ENCODE measurements at regions of chr6 and their contacts with region 1.

Region 1: DNA sequence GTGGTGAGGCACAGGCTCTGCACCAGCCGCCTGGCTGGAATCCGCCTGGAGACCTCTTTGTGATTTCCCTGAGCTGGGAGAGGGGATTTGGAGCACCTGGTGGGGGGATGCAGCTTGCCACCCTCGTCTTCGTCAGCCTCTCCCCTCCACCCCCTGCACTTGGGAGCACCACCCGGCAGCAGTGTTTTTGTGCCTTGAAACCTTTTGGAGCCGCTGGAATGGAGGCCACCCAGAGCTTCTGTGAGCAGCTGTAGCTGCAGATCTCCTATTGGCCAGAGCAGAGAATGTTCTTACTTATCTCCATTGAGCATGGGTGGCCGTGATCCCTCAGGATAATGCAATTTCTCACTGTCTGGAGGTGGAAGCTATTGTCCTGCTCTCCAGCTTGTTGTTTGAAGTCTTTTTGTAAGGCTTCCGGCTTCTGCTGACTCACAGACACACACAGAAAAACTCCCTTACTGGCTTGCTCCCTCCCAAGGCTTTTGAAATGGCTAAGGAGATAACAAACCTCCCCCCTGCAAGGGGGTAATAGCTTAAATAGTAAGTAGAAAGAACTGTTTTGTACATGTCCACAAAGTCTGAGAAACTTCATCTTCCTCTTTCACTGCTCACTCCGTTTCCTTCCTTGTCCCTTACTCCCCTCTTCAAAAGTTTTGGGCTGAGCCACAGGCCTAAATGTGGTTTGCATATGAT is 271.2 kb downstream of the PRL start:
- DNase-seq: peak; percentile 13
- H3K4me3 Mint-ChIP-seq: peak overlapping the region; percentile 43
- H3K27ac Mint-ChIP-seq: peak overlapping the region; percentile 78
- H3K4me1 Mint-ChIP-seq: peaks cover 39% of the 10 kb centered on the region
- H3K27me3 Mint-ChIP-seq: no peaks in the 10 kb centered on the region

Region 2: DNA sequence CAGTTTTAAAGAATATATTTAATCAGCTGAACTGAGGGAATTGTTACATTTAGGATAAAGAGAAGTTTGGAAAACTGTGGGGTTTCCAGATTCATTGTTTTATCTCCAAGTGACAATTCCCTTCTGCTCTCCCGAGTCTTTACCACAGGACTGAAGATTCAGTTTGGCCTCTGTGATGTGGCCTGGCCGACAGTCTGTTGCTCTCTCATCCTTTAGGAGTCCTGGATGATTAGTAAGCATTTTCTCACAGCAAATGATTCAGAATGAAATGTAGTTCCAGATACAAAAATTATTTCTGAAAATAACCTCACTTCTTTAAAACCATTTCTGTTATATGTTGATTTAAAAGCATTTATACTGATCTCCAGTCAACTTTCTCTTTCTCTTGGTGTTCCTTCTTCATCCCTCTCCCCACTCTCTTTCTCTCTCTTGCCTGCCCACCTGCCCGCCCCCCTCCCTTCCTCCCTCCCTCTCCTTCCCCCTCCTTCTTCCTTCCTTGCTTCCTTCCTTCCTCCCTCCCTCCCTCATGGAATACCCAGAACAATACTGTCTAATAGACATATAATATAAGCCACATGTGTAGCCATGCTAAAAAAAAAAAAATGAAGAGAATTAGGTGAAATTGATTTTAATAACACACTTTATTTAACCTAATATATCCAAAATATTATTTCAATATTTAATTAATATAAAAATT is 16.3 kb after region 1 on chr6:
- intact Hi-C with region 1: loop called (anchors 2 kb)
- DNase-seq: no peak
- H3K4me3 Mint-ChIP-seq: no peak overlapping the region
- H3K27ac Mint-ChIP-seq: no peak overlapping the region
- H3K4me1 Mint-ChIP-seq: peaks cover 10% of the 10 kb centered on the region
- H3K27me3 Mint-ChIP-seq: peaks cover 2% of the 10 kb centered on the region

Region 3: GRCh38 chr6:22113026-22113766 is 87.6 kb after region 1 on chr6:
- intact Hi-C with region 1: no loop called
- DNase-seq: no peak
- H3K4me3 Mint-ChIP-seq: no peak overlapping the region
- H3K27ac Mint-ChIP-seq: no peak overlapping the region
- H3K4me1 Mint-ChIP-seq: peaks cover 10% of the 10 kb centered on the region
- H3K27me3 Mint-ChIP-seq: peaks cover 6% of the 10 kb centered on the region